ENCODE measurements at regions of chr15 and their contacts with region 1.

Region 1: GRCh38 chr15:78241007-78241406 is 6.6 kb upstream of the ACSBG1 start:
- DNase-seq: peak; percentile 43 to 86
- H3K4me3 ChIP-seq: no peak overlapping the region
- H3K27ac ChIP-seq: no peak overlapping the region
- H3K4me1 ChIP-seq: 0 out of 2 replicates have a peak, but pooled peaks cover 3% of the 10 kb centered on the region
- H3K27me3 ChIP-seq: no peaks in the 10 kb centered on the region
- CTCF ChIP-seq: peak; percentile 85

Region 2: GRCh38 chr15:77959432-77959879 is 281.6 kb before region 1 on chr15:
- CTCF ChIA-PET with region 1: no interaction called
- POLR2A ChIA-PET with region 1: no interaction called
- intact Hi-C with region 1: loop called (anchors 1 kb)
- DNase-seq: peak; percentile 40 to 80
- H3K4me3 ChIP-seq: no peak overlapping the region
- H3K27ac ChIP-seq: no peak overlapping the region
- H3K4me1 ChIP-seq: no peaks in the 10 kb centered on the region
- H3K27me3 ChIP-seq: 0 out of 2 replicates have a peak, but pooled peaks cover 3% of the 10 kb centered on the region
- CTCF ChIP-seq: peak; percentile 94

Region 3: GRCh38 chr15:78131295-78132061 is 109.5 kb before region 1 on chr15 and contains the start of gene CIB2:
- CTCF ChIA-PET with region 1: no interaction called
- POLR2A ChIA-PET with region 1: no interaction called
- intact Hi-C with region 1: loop called (anchors 1 kb)
- DNase-seq: peak; percentile 49 to 72
- H3K4me3 ChIP-seq: peak within 1 kb of the TSS; percentile 93
- H3K27ac ChIP-seq: no peak within 1 kb of the TSS
- H3K4me1 ChIP-seq: peaks cover 36% of the 10 kb centered on the region
- H3K27me3 ChIP-seq: no peaks in the 10 kb centered on the region
- CTCF ChIP-seq: peak; percentile 70
- total RNA-seq, gene CIB2: 5.6 and 5.8 TPM in 2 replicates

Region 4: DNA sequence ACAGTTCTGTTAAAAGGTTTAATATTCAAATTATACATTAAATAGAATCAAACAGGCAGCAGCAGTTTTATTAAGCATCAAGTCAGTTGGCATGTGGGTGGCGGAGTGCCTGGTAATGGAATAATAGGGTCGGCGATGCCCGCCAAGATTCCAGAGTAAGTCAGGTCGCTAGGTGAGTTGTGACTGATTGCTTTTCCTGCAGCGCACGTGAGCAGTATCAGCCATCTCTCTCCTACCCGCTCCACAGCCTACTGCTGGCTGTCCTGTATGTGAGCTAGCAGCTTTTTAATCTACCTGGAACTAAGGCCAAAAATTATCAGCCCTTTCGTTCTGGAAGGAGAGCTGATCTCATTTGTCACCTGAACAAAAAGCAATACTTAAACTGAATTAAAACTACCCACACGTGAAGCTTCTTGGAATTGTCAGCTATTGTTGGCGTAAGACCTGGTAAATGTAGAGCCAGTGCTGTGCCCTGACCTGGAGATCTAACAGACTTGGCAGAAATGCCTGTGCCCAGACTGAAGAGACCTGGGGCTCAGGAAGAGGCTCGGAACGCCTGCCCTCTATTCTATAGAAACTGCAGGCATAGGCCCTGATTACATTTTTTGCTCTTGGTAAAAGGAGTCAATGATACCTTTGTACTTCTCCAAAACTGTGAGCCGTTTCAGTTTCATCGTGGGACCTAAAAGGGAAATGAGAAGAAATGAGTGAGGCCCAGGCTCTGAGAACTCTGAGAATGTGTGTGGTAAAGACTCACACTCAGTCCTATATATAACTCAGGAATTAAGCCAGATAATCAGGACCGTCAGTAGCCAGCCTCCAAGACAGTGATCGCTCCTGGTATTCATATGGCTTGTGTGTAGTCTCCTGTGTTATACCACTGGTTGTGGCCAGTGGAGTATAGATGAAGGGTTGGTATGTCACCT is 69.9 kb before region 1 on chr15:
- CTCF ChIA-PET with region 1: no interaction called
- POLR2A ChIA-PET with region 1: no interaction called
- intact Hi-C with region 1: no loop called
- DNase-seq: no peak
- H3K4me3 ChIP-seq: no peak overlapping the region
- H3K27ac ChIP-seq: no peak overlapping the region
- H3K4me1 ChIP-seq: no peaks in the 10 kb centered on the region
- H3K27me3 ChIP-seq: no peaks in the 10 kb centered on the region
- CTCF ChIP-seq: no peak

Region 5: DNA sequence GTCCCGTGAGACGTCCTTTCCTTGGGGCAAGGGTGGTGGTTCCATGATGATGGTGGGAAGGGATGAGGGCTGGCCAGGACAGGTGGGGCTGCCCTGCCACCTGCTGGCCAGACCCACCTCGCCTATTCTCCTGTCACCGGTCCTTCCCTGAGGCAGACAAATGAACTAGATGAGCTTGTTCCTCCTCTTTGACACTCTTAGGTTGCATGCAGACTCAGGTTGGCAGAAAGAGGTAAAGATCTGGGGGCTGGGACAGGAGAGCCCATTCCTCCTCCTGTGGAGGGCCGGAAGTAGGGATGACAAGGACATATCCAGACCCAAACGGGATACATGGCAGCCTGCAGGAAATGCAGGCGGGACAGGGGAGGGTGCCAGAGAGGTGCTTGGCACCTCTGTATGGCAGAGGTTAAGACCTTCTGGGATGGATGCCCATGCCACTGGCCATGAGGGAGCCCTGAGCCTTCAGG is 45.2 kb before region 1 on chr15:
- CTCF ChIA-PET with region 1: interaction called, 17 read pairs
- POLR2A ChIA-PET with region 1: no interaction called
- intact Hi-C with region 1: loop called (anchors 1 kb)
- DNase-seq: peak; percentile 46 to 53
- H3K4me3 ChIP-seq: no peak overlapping the region
- H3K27ac ChIP-seq: no peak overlapping the region
- H3K4me1 ChIP-seq: no peaks in the 10 kb centered on the region
- H3K27me3 ChIP-seq: no peaks in the 10 kb centered on the region
- CTCF ChIP-seq: peak; percentile 81

Region 6: GRCh38 chr15:78259232-78259631 is 18.2 kb after region 1 on chr15:
- CTCF ChIA-PET with region 1: interaction called, 14 read pairs
- POLR2A ChIA-PET with region 1: interaction called, 4 read pairs
- intact Hi-C with region 1: no loop called
- DNase-seq: peak; percentile 65 to 83
- H3K4me3 ChIP-seq: no peak overlapping the region
- H3K27ac ChIP-seq: peak overlapping the region; percentile 44
- H3K4me1 ChIP-seq: peaks cover 18% of the 10 kb centered on the region
- H3K27me3 ChIP-seq: no peaks in the 10 kb centered on the region
- CTCF ChIP-seq: no peak

Region 7: GRCh38 chr15:78353093-78353492 is 112.1 kb after region 1 on chr15:
- CTCF ChIA-PET with region 1: no interaction called
- POLR2A ChIA-PET with region 1: no interaction called
- intact Hi-C with region 1: no loop called
- DNase-seq: no peak
- H3K4me3 ChIP-seq: no peak overlapping the region
- H3K27ac ChIP-seq: no peak overlapping the region
- H3K4me1 ChIP-seq: no peaks in the 10 kb centered on the region
- H3K27me3 ChIP-seq: 0 out of 2 replicates have a peak, but pooled peaks cover 4% of the 10 kb centered on the region
- CTCF ChIP-seq: no peak

Region 8: GRCh38 chr15:78422571-78423340 is 181.7 kb after region 1 on chr15:
- CTCF ChIA-PET with region 1: no interaction called
- POLR2A ChIA-PET with region 1: no interaction called
- intact Hi-C with region 1: loop called (anchors 10 kb)
- DNase-seq: peak; percentile 41 to 43
- H3K4me3 ChIP-seq: no peak overlapping the region
- H3K27ac ChIP-seq: no peak overlapping the region
- H3K4me1 ChIP-seq: no peaks in the 10 kb centered on the region
- H3K27me3 ChIP-seq: no peaks in the 10 kb centered on the region
- CTCF ChIP-seq: peak; percentile 90

Region 9: GRCh38 chr15:78565097-78565951 is 324.3 kb after region 1 on chr15 and contains the start of gene CHRNA5:
- CTCF ChIA-PET with region 1: no interaction called
- POLR2A ChIA-PET with region 1: no interaction called
- intact Hi-C with region 1: no loop called
- DNase-seq: peak; percentile 84 to 97
- H3K4me3 ChIP-seq: peak within 1 kb of the TSS; percentile 68
- H3K27ac ChIP-seq: peak within 1 kb of the TSS; percentile 44
- H3K4me1 ChIP-seq: peaks cover 14% of the 10 kb centered on the region
- H3K27me3 ChIP-seq: no peaks in the 10 kb centered on the region
- CTCF ChIP-seq: no peak
- total RNA-seq, gene CHRNA5: 9.5 and 10.7 TPM in 2 replicates

Measured in PC-9 (cell line).